AG04449 (cell line): ENCODE measurements at regions of chr1 and their contacts with region 1.

Region 1: DNA sequence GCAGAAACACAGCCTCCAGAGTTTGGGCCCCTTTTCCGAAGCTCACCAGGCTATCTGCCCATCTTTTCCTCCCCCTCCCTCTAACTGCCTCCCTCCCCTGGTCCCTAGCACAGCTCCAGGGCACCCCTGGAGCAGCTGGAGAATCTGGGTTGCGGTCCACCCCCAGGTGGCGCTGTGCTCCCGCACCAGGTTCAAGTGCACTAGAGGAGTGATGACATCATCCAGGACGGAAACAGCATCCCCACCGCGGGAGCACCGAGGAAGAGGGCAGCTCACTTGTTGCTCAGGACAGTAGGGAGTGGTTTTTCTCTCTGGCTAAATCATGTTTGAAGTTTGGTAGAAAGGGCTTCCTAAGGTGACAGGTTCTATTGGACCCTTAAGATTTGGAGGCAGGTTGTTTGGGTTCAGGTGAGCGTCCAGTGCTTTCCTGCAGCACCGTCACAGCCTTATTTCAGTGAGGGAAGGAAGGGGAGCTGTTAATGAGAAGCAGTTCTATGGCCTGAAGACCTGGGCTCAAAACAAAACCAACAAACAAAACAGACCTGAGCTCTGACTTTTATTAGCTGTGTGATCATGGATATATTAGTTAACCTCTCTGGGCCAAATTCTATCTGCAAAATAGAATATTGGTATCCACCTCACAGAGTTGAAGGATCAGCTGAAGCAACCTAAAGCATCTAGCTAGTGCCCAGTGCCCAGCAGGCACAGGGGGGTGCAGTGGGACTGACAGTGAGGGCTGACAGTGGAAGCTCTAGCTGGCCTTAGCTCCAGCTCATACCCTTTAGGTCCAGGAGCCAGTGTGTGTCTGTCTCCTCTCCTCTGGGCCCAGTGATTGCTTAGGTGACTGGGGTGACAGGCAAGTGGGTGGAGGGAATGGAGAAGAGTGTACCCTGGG is 7.5 kb downstream of the SHISA4 start:
- DNase-seq: no peak
- H3K4me3 ChIP-seq: no peak overlapping the region
- CTCF ChIP-seq: peak; percentile 99

Region 2: DNA sequence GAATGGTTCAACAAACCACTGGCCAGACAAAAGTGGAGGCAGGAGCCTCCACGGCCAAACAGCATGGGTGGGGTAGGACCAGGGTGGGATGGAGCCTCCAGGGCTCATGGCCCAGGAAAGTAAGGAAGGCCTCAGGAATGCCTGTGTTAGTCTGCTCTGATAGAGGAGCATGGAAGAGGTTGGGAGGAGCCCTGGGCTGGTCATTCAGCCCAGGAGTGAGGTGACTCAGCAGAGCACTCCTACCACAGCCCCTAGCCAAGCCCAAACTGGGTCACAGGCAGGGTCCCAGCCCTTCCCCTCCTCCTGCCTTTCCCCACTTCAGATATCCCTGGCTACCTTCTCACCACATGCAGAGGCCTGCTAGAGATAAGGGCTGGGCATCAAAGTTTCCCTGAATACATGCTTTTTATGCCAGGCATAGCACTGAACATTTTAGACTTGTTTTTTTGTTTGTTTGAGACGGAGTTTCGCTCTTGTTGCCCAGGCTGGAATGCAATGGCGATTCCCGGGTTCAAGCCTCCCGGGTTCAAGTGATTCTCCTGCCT is 10.6 kb before region 1 on chr1:
- CTCF ChIA-PET with region 1: interaction called, 75 read pairs
- POLR2A ChIA-PET with region 1: interaction called, 3 read pairs
- DNase-seq: no peak
- H3K4me3 ChIP-seq: no peak overlapping the region
- CTCF ChIP-seq: no peak

Region 3: DNA sequence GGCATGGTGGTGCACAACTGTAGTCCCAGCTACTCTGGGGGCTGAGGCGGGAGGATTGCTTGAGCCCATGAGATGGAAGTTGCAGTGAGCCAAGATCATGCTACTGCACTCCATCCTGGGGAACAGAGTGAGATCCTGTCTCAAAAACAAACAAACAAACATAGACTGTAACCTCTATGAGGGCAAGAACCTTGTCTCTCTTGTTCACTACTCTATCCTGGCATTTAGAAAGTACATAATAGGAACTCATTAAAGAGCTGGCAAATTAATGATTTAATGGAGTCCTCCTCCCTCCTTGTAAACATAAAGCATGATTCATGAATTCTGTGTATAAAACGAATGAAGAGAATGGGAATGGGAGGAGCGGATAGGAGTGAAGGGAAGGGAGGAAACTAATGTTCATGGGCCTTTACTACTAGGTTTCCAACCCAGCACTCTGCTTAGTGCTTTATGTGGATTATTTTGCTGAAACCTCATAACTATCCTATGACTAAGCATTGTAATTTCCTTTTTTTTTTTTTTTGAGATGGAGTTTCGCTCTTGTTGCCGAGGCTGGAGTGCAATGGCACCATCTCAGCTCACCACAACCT is 41.6 kb after region 1 on chr1:
- CTCF ChIA-PET with region 1: interaction called, 12 read pairs
- POLR2A ChIA-PET with region 1: interaction called, 4 read pairs
- DNase-seq: no peak
- H3K4me3 ChIP-seq: no peak overlapping the region
- CTCF ChIP-seq: no peak

Region 4: DNA sequence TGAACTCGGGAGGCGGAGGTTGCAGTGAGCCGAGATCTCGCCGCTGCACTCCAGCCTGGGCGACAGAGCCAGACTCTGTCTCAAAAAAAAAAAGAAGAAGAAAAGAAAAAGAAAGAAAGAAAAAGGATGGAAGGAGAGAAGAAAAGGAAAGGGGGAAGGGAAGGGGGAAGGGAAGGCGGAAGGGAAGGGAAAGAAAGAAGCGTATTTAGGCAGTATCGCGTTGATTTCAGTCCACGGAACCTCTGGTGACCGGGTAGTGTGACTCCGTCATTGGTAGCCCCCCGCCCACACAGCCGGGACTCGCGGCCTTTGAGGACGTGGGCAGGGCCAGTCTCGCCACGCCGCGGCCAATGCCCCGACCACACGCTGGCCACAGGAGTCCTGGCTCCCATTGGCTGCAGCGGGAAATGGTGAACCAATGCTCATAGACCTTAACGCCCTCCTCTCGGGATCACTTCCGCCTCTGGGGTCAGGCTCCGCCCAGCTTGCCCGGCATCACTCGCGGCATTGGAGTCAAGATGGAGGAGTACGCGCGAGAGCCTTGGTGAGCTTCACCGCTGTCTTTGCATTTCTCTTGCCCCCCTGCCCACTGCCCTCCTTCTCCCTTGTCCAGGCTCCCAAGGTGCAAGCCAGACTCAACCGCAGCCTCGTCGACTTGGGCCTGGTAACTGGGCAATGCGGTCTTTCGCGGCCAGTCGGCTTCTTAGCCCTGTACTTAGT is 59.0 kb after region 1 on chr1 and contains the start of gene TIMM17A:
- CTCF ChIA-PET with region 1: interaction called, 99 read pairs
- POLR2A ChIA-PET with region 1: interaction called, 5 read pairs
- DNase-seq: peak; percentile 90
- H3K4me3 ChIP-seq: peak within 1 kb of the TSS; percentile 100
- CTCF ChIP-seq: no peak

Region 5: DNA sequence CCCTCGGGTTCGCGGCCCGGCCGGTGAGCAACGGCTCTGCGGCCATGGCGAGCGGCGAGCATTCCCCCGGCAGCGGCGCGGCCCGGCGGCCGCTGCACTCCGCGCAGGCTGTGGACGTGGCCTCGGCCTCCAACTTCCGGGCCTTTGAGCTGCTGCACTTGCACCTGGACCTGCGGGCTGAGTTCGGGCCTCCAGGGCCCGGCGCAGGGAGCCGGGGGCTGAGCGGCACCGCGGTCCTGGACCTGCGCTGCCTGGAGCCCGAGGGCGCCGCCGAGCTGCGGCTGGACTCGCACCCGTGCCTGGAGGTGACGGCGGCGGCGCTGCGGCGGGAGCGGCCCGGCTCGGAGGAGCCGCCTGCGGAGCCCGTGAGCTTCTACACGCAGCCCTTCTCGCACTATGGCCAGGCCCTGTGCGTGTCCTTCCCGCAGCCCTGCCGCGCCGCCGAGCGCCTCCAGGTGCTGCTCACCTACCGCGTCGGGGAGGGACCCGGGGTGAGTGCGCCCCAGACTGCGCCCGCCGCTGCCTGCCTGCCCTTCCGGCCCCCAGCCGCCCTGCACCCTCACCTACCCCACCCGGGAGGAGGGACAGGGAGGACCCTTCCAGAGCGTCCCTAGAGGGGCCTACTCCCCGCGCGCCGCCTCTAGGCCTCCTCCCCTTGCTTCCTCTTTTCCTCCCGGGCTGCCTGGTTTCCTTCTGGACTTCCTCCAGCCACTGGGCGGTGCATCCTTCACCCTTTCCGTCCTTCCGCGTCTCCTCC is 86.6 kb after region 1 on chr1 and contains the start of gene RNPEP:
- CTCF ChIA-PET with region 1: interaction called, 656 read pairs
- POLR2A ChIA-PET with region 1: interaction called, 6 read pairs
- DNase-seq: no peak
- H3K4me3 ChIP-seq: peak within 1 kb of the TSS; percentile 76
- CTCF ChIP-seq: no peak

Region 6: DNA sequence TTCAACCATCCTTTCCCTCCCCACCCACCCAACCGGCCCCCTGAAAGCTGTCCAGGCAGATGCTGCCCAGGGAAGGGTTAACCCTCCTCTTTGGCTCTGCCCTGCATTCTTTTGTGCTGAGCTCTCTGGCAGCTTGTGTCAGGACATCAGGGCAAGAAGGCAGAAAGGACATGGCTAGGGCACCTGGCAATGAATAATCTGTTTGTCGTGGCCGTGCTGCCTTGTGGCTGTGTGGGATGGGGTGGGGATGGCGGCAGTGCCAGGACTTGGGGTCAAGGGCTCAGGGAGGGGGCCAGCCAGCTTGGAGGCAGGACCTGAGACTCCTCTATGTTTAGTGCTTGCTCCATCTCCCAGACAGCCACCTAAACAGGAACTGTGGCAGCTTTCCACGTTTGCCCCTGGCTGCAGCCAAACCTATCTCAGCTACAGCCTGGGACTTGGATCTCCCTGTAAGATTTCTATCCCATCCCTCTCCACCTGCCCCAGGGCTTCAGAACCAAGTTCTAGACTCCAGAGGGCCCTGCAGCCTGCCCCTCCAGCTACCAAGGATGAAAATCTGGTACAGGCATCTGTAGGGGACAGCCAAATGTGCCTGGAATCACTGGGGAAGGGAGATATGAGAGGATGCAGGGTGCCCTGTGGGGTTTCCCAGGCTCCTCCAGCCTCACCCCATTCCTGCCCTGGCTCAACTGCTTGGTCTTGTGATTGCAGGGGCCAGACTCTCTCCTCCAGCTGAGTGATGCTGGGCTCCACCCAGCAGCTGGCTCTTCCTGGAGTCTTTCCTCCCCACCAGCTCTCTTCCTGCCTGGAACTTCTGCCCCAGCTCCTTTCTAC is 216.9 kb after region 1 on chr1:
- CTCF ChIA-PET with region 1: interaction called, 18 read pairs
- POLR2A ChIA-PET with region 1: no interaction called
- DNase-seq: no peak
- H3K4me3 ChIP-seq: no peak overlapping the region
- CTCF ChIP-seq: no peak

Region 7: DNA sequence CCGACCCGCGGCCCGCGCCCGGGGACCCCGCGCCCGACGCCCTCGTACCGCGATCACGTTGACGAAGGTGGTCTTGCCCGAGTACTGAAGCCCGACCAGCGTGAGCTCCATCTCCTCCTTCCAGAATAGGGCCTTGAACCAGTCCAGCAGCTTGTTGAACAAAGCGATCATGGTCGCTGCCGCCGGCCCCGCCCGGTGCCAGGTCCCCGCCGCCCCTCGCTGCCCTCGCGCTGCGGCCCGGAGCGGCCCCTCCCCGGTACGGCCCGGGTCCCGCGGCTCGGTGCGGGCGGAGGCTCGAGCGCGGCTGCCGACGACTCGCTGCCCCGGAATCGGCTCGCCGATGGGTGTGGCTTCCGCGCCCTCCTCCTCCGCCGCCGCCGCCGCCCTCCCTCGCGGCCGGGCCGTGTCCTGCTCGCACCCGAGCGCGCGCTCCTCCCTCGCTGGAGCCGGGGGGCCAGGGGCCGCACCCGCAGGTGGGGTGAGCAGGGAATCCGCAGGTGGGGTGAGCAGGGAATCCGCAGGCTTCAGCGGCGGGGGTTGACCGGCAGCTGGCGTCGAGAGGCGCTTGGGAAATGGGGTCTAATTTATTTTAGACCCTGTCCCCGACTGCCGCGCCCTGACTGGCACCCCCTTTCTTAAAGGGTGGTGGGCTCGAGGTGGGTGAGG is 248.4 kb after region 1 on chr1 and contains the start of gene ARL8A:
- CTCF ChIA-PET with region 1: no interaction called
- POLR2A ChIA-PET with region 1: no interaction called
- DNase-seq: no peak
- H3K4me3 ChIP-seq: peak within 1 kb of the TSS; percentile 76
- CTCF ChIP-seq: no peak